ENCODE measurements at regions of chrX and their contacts with region 1.

Region 1: GRCh38 chrX:118807151-118808017 is 16.2 kb upstream of the ZCCHC12 start:
- DNase-seq: no peak
- H3K4me3 ChIP-seq: no peak overlapping the region
- H3K27ac ChIP-seq: no peak overlapping the region
- H3K4me1 ChIP-seq: no peaks in the 10 kb centered on the region
- H3K27me3 ChIP-seq: no peaks in the 10 kb centered on the region
- CTCF ChIP-seq: peak; percentile 52 to 68 (median 67)

Region 2: DNA sequence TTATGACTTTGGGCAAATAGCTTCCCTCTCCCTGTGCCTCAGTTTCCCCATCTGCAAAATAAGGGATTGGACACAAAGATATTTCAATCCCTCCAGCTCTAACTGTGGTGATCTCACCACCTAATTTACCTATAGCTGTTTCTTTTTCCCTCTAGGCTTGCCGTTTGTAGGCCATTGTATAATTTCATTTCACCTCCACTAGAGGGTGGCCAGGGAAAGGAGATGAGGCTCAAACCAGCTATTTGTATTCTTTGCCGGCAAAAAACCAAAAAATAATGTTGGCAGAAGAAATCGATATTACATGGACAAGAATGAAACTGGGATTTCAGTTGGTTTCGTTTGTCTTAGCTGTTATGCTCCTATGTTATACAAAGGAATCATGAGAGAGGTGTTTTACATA is 347.9 kb before region 1 on chrX:
- intact Hi-C with region 1: loop called (anchors 5 kb)
- DNase-seq: no peak
- H3K4me3 ChIP-seq: no peak overlapping the region
- H3K27ac ChIP-seq: no peak overlapping the region
- H3K4me1 ChIP-seq: no peaks in the 10 kb centered on the region
- H3K27me3 ChIP-seq: no peaks in the 10 kb centered on the region
- CTCF ChIP-seq: peak; percentile 36 to 57 (median 51)

Region 3: GRCh38 chrX:118644378-118644777 is 163.0 kb before region 1 on chrX:
- intact Hi-C with region 1: loop called (anchors 2 kb)
- DNase-seq: no peak
- H3K4me3 ChIP-seq: no peak overlapping the region
- H3K27ac ChIP-seq: no peak overlapping the region
- H3K4me1 ChIP-seq: no peaks in the 10 kb centered on the region
- H3K27me3 ChIP-seq: no peaks in the 10 kb centered on the region
- CTCF ChIP-seq: peak in 2 of 3 experiments; percentile 11 to 41

Region 4: DNA sequence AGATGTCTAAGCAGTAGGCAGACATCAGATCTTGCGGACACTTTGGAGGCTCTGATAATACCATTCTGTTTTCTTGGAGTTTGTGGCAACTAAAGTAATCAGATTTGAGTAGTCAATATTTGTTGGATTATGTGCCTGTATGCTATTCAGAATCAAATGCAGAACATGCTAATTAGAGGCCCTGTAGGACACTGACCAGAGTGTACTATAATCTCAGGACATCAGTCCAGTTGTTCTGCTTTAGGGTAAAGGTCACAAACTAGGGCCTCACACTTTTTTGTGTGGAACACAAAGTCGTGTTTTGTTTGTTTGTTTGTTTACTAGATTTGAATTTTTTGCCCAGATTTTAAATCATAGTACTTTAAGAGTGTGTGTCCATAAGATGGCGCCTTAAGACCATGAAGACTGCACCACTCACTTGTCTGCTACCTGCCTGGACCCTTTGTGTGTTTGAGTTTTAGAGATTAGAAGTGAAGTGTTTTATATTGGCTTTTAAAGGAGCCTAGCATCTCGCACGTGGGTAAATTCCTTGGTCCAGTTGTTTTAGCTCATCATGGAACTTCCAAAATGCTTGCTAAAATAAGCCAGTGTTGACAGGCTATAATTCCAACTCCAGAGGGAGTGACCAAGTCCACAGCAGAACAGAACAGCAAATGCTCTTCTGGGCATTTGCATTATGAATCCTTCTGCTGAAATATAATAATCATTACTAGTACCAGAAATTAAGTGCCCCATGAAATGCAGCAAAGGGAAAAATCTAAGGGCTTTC is 45.3 kb before region 1 on chrX:
- intact Hi-C with region 1: loop called (anchors 5 kb)
- DNase-seq: no peak
- H3K4me3 ChIP-seq: no peak overlapping the region
- H3K27ac ChIP-seq: no peak overlapping the region
- H3K4me1 ChIP-seq: no peaks in the 10 kb centered on the region
- H3K27me3 ChIP-seq: no peaks in the 10 kb centered on the region
- CTCF ChIP-seq: no peak

Measured in ascending aorta (tissue), 2 donors.